Tibial artery (tissue), 4 donors: ENCODE measurements at regions of chr2 and their contacts with region 1.

Region 1: GRCh38 chr2:99180755-99181623 is at the starts of genes MITD1 and MRPL30:
- DNase-seq: peak; percentile 90 to 96
- H3K4me3 ChIP-seq: peak within 1 kb of the TSS; percentile 71 to 91
- H3K27ac ChIP-seq: peak within 1 kb of the TSS; percentile 69 to 78
- H3K4me1 ChIP-seq: peaks cover 0 to 35% (median 26%) of the 10 kb centered on the region in 4 donors
- H3K27me3 ChIP-seq: no peaks in the 10 kb centered on the region
- CTCF ChIP-seq: peak in 1 of 2 experiments; percentile 13

Region 2: DNA sequence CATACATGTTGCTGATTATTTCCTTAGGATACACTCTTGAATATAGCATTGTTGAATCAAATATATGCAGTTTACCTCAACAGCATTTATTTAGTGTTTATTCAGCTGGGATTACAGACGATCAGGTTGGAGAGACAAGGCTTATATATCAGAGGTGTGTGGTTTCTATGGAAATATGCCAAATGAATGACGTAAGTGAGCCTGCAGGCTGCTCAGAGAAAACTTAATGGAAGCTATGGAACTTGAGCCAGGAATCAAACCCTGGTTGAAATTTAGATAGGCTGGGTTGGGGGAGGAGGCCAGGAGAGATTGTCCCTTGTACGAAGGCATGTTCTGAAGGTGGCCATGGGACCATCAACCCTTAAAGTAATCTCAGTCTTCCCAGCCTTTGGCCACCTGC is 656.8 kb before region 1 on chr2:
- intact Hi-C with region 1: no loop called
- DNase-seq: no peak
- H3K4me3 ChIP-seq: no peak overlapping the region
- H3K27ac ChIP-seq: no peak overlapping the region
- H3K4me1 ChIP-seq: no peaks in the 10 kb centered on the region
- H3K27me3 ChIP-seq: no peaks in the 10 kb centered on the region
- CTCF ChIP-seq: no peak

Region 3: DNA sequence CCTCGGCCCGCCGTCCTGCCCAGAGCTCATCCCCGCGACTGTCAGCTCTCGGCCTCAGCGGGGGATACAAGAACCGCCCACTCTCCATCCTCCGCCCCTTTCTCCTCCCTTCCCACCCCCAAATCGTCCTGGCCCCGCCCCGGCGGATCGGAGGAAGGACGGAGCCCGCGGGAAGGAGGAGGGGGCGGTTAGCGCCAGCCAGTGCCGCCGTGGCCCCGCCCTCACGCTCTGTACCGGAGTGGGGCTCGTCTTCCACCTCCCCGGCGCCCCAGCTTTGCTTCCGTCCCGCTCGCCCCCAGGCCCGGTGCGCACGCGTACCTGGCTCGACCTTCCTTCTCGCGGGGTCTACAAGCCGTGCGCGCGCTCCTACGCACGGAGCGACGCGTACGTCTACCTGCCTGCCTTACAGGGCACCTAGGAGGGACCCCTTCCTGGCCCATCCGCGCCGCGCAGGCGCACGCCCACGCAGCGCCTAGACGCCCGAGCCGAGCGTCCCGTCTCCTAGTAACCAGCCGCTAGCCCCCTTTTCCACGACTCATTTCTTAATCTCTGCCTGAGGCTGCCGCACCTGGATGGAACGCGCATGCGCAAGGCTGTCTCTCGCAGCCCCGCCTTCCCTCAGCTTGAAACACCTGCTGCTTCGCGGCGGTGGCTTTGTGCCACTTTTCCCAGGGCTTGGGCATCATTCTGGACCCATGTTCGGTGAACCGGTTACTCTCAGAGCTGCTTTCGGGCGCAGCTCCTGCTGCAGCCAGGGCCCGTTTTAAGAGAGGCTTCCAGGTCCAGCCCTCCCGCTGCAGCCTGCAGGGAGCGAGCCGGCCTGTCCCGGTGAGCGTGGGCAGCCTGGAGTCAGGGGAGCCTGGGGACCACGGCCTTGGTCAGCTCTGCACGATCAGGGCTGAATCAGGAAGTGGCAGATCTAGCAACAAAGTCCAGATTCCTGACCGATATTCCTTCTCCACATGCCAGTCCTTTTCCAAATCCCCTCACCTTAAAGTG is 39.6 kb before region 1 on chr2 and contains the start of gene C2orf15:
- intact Hi-C with region 1: loop called (anchors 5 kb)
- DNase-seq: peak; percentile 94 to 96
- H3K4me3 ChIP-seq: peak within 1 kb of the TSS; percentile 64 to 91
- H3K27ac ChIP-seq: peak within 1 kb of the TSS; percentile 71 to 84
- H3K4me1 ChIP-seq: peaks cover 0 to 7% (median 4%) of the 10 kb centered on the region in 4 donors
- H3K27me3 ChIP-seq: no peaks in the 10 kb centered on the region
- CTCF ChIP-seq: no peak

Region 4: GRCh38 chr2:99337113-99338028 is 156.4 kb after region 1 on chr2 and contains the start of gene EIF5B:
- intact Hi-C with region 1: loop called (anchors 10 kb)
- DNase-seq: peak; percentile 95 to 98
- H3K4me3 ChIP-seq: peak within 1 kb of the TSS; percentile 82 to 96
- H3K27ac ChIP-seq: peak within 1 kb of the TSS; percentile 90 to 94
- H3K4me1 ChIP-seq: peaks cover 0 to 39% (median 28%) of the 10 kb centered on the region in 4 donors
- H3K27me3 ChIP-seq: no peaks in the 10 kb centered on the region
- CTCF ChIP-seq: peak; percentile 57